Common myeloid progenitor, CD34-positive (primary cell): ENCODE measurements at regions of chr11 and their contacts with region 1.

Region 1: DNA sequence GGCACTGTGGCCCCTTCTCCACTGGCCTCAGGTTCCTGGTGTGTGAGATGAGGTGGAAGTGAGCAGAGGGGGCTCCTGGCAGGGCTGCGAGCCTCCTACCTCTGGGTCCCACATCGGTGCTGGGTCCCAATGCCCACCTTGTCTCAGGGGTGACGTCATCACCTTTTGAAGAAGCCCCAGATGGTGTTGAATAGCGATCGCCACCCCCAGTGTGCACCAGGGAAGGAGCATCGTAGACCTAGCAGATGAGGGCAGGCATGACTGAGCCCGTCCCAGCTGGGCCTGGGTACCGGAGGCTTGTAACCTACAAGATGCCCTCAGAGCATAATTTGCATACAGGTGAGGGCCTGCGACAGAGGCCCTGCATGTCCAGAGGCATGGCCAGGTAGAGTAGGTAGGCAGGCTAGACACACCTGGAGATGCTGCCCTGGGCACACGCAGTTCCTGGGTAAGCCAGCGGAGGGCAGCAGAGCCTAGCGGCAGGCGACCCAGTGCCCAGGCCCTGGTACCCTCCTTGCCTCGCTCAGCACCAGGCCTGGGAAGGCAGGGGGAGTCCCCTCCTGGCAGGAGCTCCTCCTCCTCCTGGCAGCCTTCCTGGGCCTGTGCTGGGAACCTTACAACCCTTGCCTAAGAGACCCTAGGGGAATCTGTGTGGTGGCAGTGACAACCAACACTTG is 52.5 kb downstream of the TPCN2 start:
- DNase-seq: peak; percentile 54 to 70 (median 60)
- H3K4me3 ChIP-seq: no peak overlapping the region
- H3K27ac ChIP-seq: no peak overlapping the region
- H3K4me1 ChIP-seq: peaks cover 0 to 8% (median 3%) of the 10 kb centered on the region in 4 experiments
- H3K27me3 ChIP-seq: peaks cover 0 to 26% (median 2%) of the 10 kb centered on the region in 5 experiments

Region 2: DNA sequence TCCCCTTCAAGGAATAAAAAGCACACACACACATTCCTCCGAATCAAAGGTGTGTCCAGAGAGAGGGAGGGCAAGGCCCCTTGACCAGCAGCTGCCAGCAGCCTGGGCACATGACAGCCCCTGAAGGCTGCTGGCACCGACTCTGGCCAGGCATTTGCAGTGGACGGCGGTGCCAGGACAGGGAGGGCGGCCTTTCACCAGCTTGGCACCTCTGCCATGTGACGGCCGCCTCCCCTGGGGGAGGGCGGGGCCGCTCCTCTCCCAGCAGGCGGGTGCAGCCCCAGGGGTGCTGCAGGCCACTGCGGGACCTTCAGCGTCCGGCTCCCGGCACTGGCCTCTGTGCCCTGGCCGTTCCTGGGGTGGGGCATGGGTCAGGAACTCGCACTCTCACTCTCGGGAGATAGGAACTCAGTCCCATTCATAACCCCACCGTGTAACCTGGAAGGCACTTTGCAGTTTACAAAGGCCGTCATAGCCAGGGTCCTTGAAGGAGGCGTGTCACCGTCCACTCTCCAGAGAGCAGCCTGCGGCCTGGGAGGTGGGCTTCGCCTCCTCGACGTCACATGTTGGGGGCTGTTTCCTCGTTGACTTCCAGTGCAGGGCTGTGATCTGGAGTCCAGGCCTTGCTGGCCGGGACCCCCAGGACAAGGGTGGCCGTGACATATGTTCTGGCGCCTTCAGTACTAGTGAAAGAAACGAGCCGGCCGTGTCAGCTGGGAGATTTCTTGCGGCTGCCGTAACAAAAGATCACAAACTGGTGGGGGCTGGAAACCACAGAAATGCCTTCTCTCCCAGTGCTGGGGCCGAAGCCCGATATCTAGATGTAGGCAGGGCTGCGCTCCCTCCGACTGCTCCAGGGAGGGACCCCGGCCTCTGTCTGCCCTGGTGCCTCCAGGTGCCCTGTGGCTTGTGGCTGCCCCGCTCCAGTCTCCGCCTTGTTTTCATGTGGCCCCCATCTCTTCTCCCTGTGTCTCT is 14.6 kb after region 1 on chr11:
- CTCF ChIA-PET with region 1: interaction called, 14 read pairs
- POLR2A ChIA-PET with region 1: no interaction called
- DNase-seq: no peak
- H3K4me3 ChIP-seq: no peak overlapping the region
- H3K27ac ChIP-seq: no peak overlapping the region
- H3K4me1 ChIP-seq: peaks cover 0 to under 1% (median under 1%) of the 10 kb centered on the region in 4 experiments
- H3K27me3 ChIP-seq: peaks cover 0 to 2% (median 0%) of the 10 kb centered on the region in 5 experiments

Region 3: GRCh38 chr11:69642913-69643632 is 541.8 kb after region 1 on chr11:
- CTCF ChIA-PET with region 1: interaction called, 59 read pairs
- POLR2A ChIA-PET with region 1: no interaction called
- DNase-seq: peak; percentile 72 to 84 (median 83)
- H3K4me3 ChIP-seq: peak overlapping the region in 6 of 7 experiments; percentile 43 to 74 (median 60)
- H3K27ac ChIP-seq: no peak overlapping the region
- H3K4me1 ChIP-seq: peaks cover 3 to 52% (median 47%) of the 10 kb centered on the region in 4 experiments
- H3K27me3 ChIP-seq: peaks cover 3 to 59% (median 22%) of the 10 kb centered on the region in 5 experiments